GM12878 (cell line): ENCODE measurements at regions of chr4 and their contacts with region 1.

Region 1: DNA sequence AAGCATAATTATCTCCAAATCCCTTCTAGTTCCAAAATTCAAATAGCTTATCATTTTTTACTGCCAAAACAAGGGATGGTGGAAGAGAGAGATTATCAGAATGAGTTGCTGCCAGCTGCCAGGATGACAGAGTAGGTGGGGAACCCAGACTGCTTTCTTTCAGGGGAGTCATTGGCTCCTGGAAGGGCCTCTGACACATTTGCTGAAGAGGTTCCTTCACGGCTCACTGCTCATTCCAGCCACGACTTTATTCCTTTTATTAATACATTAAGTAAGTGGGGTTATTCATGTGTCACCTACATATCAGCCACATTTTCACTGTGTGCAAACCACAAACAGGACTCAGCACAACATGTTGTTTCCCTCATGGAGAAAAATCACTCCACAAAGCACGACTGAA is 12.7 kb upstream of the SMIM43 start:
- DNase-seq: no peak
- ATAC-seq: peak; percentile 75
- H3K4me3 ChIP-seq: no peak overlapping the region
- H3K27ac ChIP-seq: no peak overlapping the region
- H3K4me1 ChIP-seq: peaks cover 12% of the 10 kb centered on the region
- H3K27me3 ChIP-seq: no peaks in the 10 kb centered on the region; a peak in 1 of 4 replicates
- CTCF ChIP-seq: no peak
- EP300 ChIP-seq: no peak
- POLR2A ChIP-seq: no peak
- RAD21 ChIP-seq: no peak

Region 2: GRCh38 chr4:121764707-121765593 is 12.7 kb before region 1 on chr4 and contains the start of gene SMIM43:
- CTCF ChIA-PET with region 1: no interaction called
- POLR2A ChIA-PET with region 1: interaction called, 3 read pairs
- RAD21 ChIA-PET with region 1: interaction called, 6 read pairs
- SMC1A ChIA-PET with region 1: interaction called, 36 read pairs
- in situ Hi-C with region 1: no loop called
- intact Hi-C with region 1: no loop called
- DNase-seq: no peak
- ATAC-seq: peak; percentile 42
- H3K4me3 ChIP-seq: peak within 1 kb of the TSS; percentile 2; the same call in 1 of the 2 replicates
- H3K27ac ChIP-seq: no peak within 1 kb of the TSS
- H3K4me1 ChIP-seq: no peaks in the 10 kb centered on the region
- H3K27me3 ChIP-seq: peaks cover 1 to 5% of the 10 kb centered on the region in 2 experiments; a peak in 3 of 4 replicates
- CTCF ChIP-seq: no peak
- EP300 ChIP-seq: no peak
- POLR2A ChIP-seq: no peak
- RAD21 ChIP-seq: no peak
- polyA plus RNA-seq, gene SMIM43: not detected

Region 3: DNA sequence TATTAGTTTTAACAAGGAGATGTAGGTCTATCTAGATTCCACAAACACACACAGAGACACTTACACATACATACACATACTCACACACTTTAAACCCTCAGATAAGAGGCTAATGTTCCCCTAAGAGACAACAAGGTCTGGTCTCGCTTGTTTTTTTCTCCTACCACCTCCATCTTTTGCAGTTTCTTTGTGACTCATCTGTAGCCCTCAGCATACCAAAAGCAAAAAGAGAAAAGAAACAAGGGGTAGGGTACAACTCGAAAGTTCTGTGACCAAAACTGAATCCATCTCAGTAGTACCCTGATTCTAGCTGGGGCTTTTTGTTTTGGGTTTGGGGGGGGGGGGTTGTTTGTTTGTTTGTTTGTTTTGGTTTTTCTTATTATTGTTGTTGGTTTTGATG is 11.3 kb after region 1 on chr4:
- CTCF ChIA-PET with region 1: interaction called, 7 read pairs
- POLR2A ChIA-PET with region 1: interaction called, 6 read pairs
- RAD21 ChIA-PET with region 1: interaction called, 3 read pairs
- SMC1A ChIA-PET with region 1: interaction called, 11 read pairs
- in situ Hi-C with region 1: no loop called
- intact Hi-C with region 1: no loop called
- DNase-seq: peak; percentile 30
- ATAC-seq: peak; percentile 89
- H3K4me3 ChIP-seq: no peak overlapping the region
- H3K27ac ChIP-seq: no peak overlapping the region
- H3K4me1 ChIP-seq: peaks cover 18% of the 10 kb centered on the region
- H3K27me3 ChIP-seq: no peaks in the 10 kb centered on the region
- CTCF ChIP-seq: no peak
- EP300 ChIP-seq: no peak
- POLR2A ChIP-seq: no peak
- RAD21 ChIP-seq: 0 out of 2 replicates have a peak, but pooled peaks have one; percentile 8

Region 4: DNA sequence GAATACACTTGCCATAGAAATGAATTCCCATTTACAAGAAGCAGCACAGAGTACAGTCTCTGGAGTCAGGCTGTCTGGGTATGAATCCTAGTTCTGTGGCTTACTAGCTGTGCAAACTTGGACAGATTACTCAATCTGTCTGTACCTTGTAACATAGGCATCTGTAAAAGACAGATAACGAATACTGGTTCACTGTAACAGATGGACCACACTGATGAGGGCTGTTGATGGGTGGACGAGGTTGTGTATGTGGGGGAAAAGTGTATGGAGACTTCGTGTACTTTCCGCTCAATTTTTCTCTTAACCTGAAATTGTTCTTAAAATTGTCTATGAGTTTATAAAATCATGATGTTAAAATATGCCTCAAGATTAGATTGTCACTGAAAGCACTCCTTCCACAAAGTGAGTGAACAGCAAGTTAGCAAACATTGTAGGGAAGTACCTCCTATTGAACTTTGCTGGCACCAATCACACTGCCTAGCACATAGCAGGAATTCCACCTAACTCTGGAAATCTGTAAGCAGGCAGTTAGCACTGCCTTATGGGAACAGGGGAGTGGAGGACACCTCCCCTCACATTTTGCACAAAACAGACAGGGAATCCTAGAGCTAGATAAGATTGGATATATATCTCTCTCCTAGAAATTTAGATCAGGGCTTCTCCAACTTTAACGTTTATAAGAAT is 17.0 kb after region 1 on chr4:
- CTCF ChIA-PET with region 1: interaction called, 7 read pairs
- POLR2A ChIA-PET with region 1: interaction called, 19 read pairs
- RAD21 ChIA-PET with region 1: interaction called, 28 read pairs
- SMC1A ChIA-PET with region 1: interaction called, 34 read pairs
- in situ Hi-C with region 1: no loop called
- intact Hi-C with region 1: no loop called
- DNase-seq: no peak
- ATAC-seq: no peak
- H3K4me3 ChIP-seq: no peak overlapping the region
- H3K27ac ChIP-seq: no peak overlapping the region
- H3K4me1 ChIP-seq: peaks cover 24% of the 10 kb centered on the region
- H3K27me3 ChIP-seq: no peaks in the 10 kb centered on the region
- CTCF ChIP-seq: no peak
- EP300 ChIP-seq: no peak
- POLR2A ChIP-seq: no peak
- RAD21 ChIP-seq: no peak

Region 5: DNA sequence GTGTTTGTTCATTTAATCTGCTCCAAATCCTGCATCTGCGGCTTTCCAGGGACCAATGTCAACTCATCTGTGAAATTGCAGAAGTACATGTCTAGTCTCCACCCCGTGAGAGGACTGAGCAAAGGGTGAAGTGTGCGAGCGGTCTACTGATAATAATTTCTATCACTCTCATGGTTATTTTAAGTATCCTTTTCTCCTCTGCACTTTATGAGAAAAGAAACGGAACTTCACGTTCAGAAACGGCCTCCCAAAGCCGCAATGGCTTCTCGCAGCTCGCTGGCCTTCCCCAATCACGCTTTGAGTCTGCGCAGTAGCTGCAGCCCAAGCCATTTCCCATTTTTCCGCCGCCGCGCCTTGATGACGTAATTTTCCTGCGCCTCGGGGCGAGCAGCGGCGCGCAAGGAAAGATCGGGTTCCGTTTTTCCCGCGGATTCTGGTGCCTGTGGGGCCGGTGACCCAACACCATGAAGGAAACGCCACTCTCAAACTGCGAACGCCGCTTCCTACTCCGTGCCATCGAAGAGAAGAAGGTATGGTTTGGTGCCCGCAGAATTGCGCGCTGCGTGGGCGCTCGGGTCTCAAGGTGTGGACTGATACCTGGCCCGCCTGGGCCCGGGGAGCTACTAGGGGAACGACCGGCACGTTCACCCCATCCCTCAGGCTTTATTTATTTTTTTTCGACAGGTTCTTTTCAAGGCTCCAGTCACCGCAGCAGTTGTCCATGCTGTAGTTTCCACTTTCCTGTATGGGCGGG is 23.5 kb after region 1 on chr4 and contains the start of gene EXOSC9:
- CTCF ChIA-PET with region 1: interaction called, 7 read pairs
- POLR2A ChIA-PET with region 1: interaction called, 19 read pairs
- RAD21 ChIA-PET with region 1: interaction called, 28 read pairs
- SMC1A ChIA-PET with region 1: interaction called, 34 read pairs
- in situ Hi-C with region 1: no loop called
- intact Hi-C with region 1: no loop called
- DNase-seq: peak; percentile 88
- ATAC-seq: peak; percentile 86
- H3K4me3 ChIP-seq: peak within 1 kb of the TSS; percentile 79
- H3K27ac ChIP-seq: peak within 1 kb of the TSS; percentile 94
- H3K4me1 ChIP-seq: peaks cover 19% of the 10 kb centered on the region
- H3K27me3 ChIP-seq: no peaks in the 10 kb centered on the region
- CTCF ChIP-seq: no peak
- EP300 ChIP-seq: peak; percentile 22 to 30; a peak in 2 of 4 replicates
- POLR2A ChIP-seq: peak; percentile 84
- RAD21 ChIP-seq: no peak
- polyA plus RNA-seq, gene EXOSC9: 115 to 131 TPM

Region 6: GRCh38 chr4:121823505-121824170 is 46.0 kb after region 1 on chr4 and contains the start of gene CCNA2:
- CTCF ChIA-PET with region 1: interaction called, 4 read pairs
- POLR2A ChIA-PET with region 1: interaction called, 7 read pairs
- RAD21 ChIA-PET with region 1: interaction called, 5 read pairs
- SMC1A ChIA-PET with region 1: interaction called, 12 read pairs
- in situ Hi-C with region 1: no loop called
- intact Hi-C with region 1: no loop called
- DNase-seq: peak; percentile 83
- ATAC-seq: peak; percentile 94
- H3K4me3 ChIP-seq: peak within 1 kb of the TSS; percentile 100
- H3K27ac ChIP-seq: peak within 1 kb of the TSS; percentile 89
- H3K4me1 ChIP-seq: no peaks in the 10 kb centered on the region
- H3K27me3 ChIP-seq: no peaks in the 10 kb centered on the region
- CTCF ChIP-seq: peak in 1 of 3 experiments; percentile 4; a peak in 1 of 6 replicates
- EP300 ChIP-seq: no peak
- POLR2A ChIP-seq: peak; percentile 95
- RAD21 ChIP-seq: no peak
- polyA plus RNA-seq, gene CCNA2: 21.8 to 34.7 TPM